ENCODE measurements at regions of chr10 and their contacts with region 1.

Region 1: DNA sequence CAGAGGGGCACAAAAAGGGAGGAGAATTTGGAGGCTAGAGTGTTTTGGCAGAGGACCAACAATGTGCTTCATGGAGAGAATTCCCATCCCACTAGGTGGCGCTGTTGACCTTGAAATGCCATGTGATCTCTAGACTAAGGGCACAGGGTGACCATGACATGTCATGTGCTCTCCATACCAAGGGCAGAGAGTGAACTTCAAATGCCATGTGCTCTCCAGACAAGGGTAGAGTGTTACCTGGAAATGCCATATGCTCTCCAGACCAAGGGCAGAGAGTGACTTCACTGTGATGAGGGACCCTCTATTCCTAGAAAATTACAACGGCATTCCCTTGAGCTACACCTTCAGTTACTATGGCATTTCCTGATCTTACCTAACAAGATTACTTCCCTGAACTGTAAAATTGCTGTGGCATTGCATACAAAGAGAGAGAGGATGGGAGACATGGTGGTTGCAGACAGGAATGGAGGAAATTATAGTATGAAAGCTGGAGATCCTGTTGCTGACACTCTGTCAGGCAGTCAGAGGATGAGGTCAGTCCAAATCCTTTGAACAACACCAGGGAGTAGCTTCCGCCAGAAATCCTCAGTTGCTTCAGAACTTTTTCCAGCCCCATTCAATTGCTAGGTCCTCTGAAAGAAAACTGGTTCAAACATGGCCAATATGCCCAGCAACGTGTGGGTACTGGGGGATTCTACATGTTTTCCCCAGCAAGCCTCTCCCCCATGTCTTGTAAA is 60.9 kb upstream of the ACSM6 start:
- DNase-seq: peak; percentile 66
- ATAC-seq: peak; percentile 90
- H3K4me3 ChIP-seq: no peak overlapping the region
- H3K27ac ChIP-seq: no peak overlapping the region
- H3K4me1 ChIP-seq: no peaks in the 10 kb centered on the region
- H3K27me3 ChIP-seq: no peaks in the 10 kb centered on the region
- CTCF ChIP-seq: peak; percentile 87

Region 2: GRCh38 chr10:93897070-93897780 is 1236.0 kb before region 1 on chr10:
- CTCF ChIA-PET with region 1: no interaction called
- POLR2A ChIA-PET with region 1: no interaction called
- in situ Hi-C with region 1: no loop called
- intact Hi-C with region 1: no loop called
- DNase-seq: no peak
- ATAC-seq: no peak
- H3K4me3 ChIP-seq: no peak overlapping the region
- H3K27ac ChIP-seq: no peak overlapping the region; the same call in 1 of the 2 replicates
- H3K4me1 ChIP-seq: peaks cover 18% of the 10 kb centered on the region
- H3K27me3 ChIP-seq: no peaks in the 10 kb centered on the region
- CTCF ChIP-seq: no peak

Region 3: GRCh38 chr10:94645285-94645684 is 487.9 kb before region 1 on chr10:
- CTCF ChIA-PET with region 1: no interaction called
- POLR2A ChIA-PET with region 1: no interaction called
- in situ Hi-C with region 1: no loop called
- intact Hi-C with region 1: no loop called
- DNase-seq: no peak
- ATAC-seq: no peak
- H3K4me3 ChIP-seq: no peak overlapping the region
- H3K27ac ChIP-seq: no peak overlapping the region
- H3K4me1 ChIP-seq: no peaks in the 10 kb centered on the region
- H3K27me3 ChIP-seq: no peaks in the 10 kb centered on the region
- CTCF ChIP-seq: no peak

Region 4: GRCh38 chr10:95201736-95202135 is 68.6 kb after region 1 on chr10:
- CTCF ChIA-PET with region 1: no interaction called
- POLR2A ChIA-PET with region 1: no interaction called
- in situ Hi-C with region 1: no loop called
- intact Hi-C with region 1: no loop called
- DNase-seq: no peak
- ATAC-seq: peak; percentile 72
- H3K4me3 ChIP-seq: no peak overlapping the region
- H3K27ac ChIP-seq: no peak overlapping the region
- H3K4me1 ChIP-seq: no peaks in the 10 kb centered on the region
- H3K27me3 ChIP-seq: no peaks in the 10 kb centered on the region
- CTCF ChIP-seq: peak; percentile 55

Region 5: GRCh38 chr10:95229724-95230627 is 96.8 kb after region 1 on chr10:
- CTCF ChIA-PET with region 1: no interaction called
- POLR2A ChIA-PET with region 1: no interaction called
- in situ Hi-C with region 1: no loop called
- intact Hi-C with region 1: no loop called
- DNase-seq: peak; percentile 91
- ATAC-seq: peak; percentile 93
- H3K4me3 ChIP-seq: peak overlapping the region in 1 of 2 experiments; percentile 15; a peak in 1 of 4 replicates
- H3K27ac ChIP-seq: peak overlapping the region; percentile 93
- H3K4me1 ChIP-seq: peaks cover 21% of the 10 kb centered on the region
- H3K27me3 ChIP-seq: no peaks in the 10 kb centered on the region
- CTCF ChIP-seq: no peak

Region 6: GRCh38 chr10:95241533-95241932 is 108.3 kb after region 1 on chr10:
- CTCF ChIA-PET with region 1: interaction called, 4 read pairs
- POLR2A ChIA-PET with region 1: no interaction called
- in situ Hi-C with region 1: no loop called
- intact Hi-C with region 1: loop called (anchors 2 kb)
- DNase-seq: no peak
- ATAC-seq: no peak
- H3K4me3 ChIP-seq: no peak overlapping the region
- H3K27ac ChIP-seq: peak overlapping the region; percentile 34; the same call in 1 of the 2 replicates
- H3K4me1 ChIP-seq: peaks cover 30% of the 10 kb centered on the region
- H3K27me3 ChIP-seq: no peaks in the 10 kb centered on the region
- CTCF ChIP-seq: no peak